Left ventricle myocardium superior (tissue), 1 donor: ENCODE measurements at regions of chrX and their contacts with region 1.

Region 1: GRCh38 chrX:141669689-141670088 is 28.9 kb downstream of the SPANXD start:
- DNase-seq: no peak
- ATAC-seq: no peak

Region 2: GRCh38 chrX:141724186-141724585 is 54.5 kb after region 1 on chrX:
- intact Hi-C with region 1: loop called (anchors 5 kb)
- DNase-seq: no peak
- ATAC-seq: no peak